ENCODE measurements at regions of chr20 and their contacts with region 1.

Region 1: GRCh38 chr20:56554869-56555268 is 21.8 kb downstream of the FAM209B start:
- DNase-seq: peak; percentile 77 to 99
- H3K4me3 ChIP-seq: peak overlapping the region; percentile 25; the same call in 1 of the 2 replicates
- H3K27ac ChIP-seq: peak overlapping the region; percentile 76
- H3K4me1 ChIP-seq: peaks cover 27% of the 10 kb centered on the region
- H3K27me3 ChIP-seq: no peaks in the 10 kb centered on the region
- CTCF ChIP-seq: peak; percentile 45

Region 2: DNA sequence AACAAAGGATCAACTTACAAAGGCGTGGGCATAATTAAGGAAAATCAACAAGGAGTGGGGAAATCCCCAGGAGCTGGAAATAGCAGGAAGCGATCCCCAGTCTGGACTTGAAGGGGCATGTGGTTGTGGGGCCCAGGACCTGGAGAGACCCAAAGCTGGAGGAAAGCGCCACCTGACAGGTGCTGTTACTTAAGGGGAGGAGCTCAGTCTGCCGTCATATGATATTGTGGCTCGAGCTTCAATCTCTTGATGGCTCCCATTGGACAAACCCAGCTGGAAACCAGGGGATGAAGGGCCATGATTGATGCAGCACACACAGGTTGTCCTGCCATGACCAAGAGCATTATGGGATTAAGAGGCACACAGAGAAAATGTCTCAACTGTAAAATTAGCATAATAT is 248.0 kb before region 1 on chr20:
- CTCF ChIA-PET with region 1: no interaction called
- POLR2A ChIA-PET with region 1: no interaction called
- intact Hi-C with region 1: no loop called
- DNase-seq: no peak
- H3K4me3 ChIP-seq: no peak overlapping the region
- H3K27ac ChIP-seq: no peak overlapping the region
- H3K4me1 ChIP-seq: no peaks in the 10 kb centered on the region
- H3K27me3 ChIP-seq: peaks cover 61% of the 10 kb centered on the region
- CTCF ChIP-seq: no peak

Region 3: GRCh38 chr20:56574531-56575142 is 19.8 kb after region 1 on chr20:
- CTCF ChIA-PET with region 1: interaction called, 13 read pairs
- POLR2A ChIA-PET with region 1: no interaction called
- intact Hi-C with region 1: loop called (anchors 1 kb)
- DNase-seq: no peak
- H3K4me3 ChIP-seq: no peak overlapping the region
- H3K27ac ChIP-seq: no peak overlapping the region
- H3K4me1 ChIP-seq: peaks cover 12% of the 10 kb centered on the region
- H3K27me3 ChIP-seq: no peaks in the 10 kb centered on the region
- CTCF ChIP-seq: no peak

Region 4: DNA sequence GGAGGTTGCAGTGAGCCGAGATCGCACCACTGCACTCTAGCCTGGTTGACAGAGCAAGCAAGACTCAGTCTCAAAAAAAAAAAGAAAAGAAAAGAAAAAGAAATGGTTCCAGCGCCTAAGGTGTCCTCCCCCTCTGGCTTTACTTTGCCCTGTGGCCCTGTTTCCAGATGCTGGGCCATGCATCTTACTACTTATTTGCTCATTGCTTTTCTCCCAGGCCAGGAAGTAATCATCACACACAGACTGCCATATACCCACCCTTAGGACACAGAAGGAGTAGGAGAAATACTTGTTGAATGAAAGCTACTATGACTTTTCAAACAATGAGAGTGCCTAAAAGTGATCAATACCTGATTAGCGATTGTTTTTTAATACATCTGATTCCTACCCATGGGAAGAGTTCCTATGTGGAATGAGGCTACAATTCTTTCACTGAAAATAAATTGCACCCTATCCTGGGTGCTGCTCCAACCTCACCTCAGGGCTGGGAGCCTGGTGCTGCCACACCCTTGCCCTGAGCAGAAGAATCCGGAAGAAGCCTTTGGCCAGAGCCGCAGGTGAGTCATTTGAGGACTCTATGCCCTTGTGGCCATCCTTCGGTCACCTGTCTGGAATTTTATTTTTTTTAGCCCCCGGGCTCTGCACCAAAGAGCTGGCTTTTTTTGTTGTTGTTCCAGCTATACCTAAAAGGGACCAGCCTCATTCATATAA is 51.5 kb after region 1 on chr20:
- CTCF ChIA-PET with region 1: no interaction called
- POLR2A ChIA-PET with region 1: no interaction called
- intact Hi-C with region 1: loop called (anchors 2 kb)
- DNase-seq: peak; percentile 95 to 98
- H3K4me3 ChIP-seq: peak overlapping the region; percentile 25; the same call in 1 of the 2 replicates
- H3K27ac ChIP-seq: peak overlapping the region; percentile 94
- H3K4me1 ChIP-seq: peaks cover 65% of the 10 kb centered on the region
- H3K27me3 ChIP-seq: no peaks in the 10 kb centered on the region
- CTCF ChIP-seq: no peak

Region 5: GRCh38 chr20:56689288-56689687 is 134.4 kb after region 1 on chr20:
- CTCF ChIA-PET with region 1: no interaction called
- POLR2A ChIA-PET with region 1: no interaction called
- intact Hi-C with region 1: loop called (anchors 1 kb)
- DNase-seq: peak; percentile 84 to 98
- H3K4me3 ChIP-seq: peak overlapping the region; percentile 50
- H3K27ac ChIP-seq: peak overlapping the region; percentile 99
- H3K4me1 ChIP-seq: peaks cover 55% of the 10 kb centered on the region
- H3K27me3 ChIP-seq: no peaks in the 10 kb centered on the region
- CTCF ChIP-seq: no peak

Region 6: GRCh38 chr20:56769870-56770600 is 215.2 kb after region 1 on chr20:
- CTCF ChIA-PET with region 1: no interaction called
- POLR2A ChIA-PET with region 1: no interaction called
- intact Hi-C with region 1: no loop called
- DNase-seq: no peak
- H3K4me3 ChIP-seq: no peak overlapping the region
- H3K27ac ChIP-seq: no peak overlapping the region
- H3K4me1 ChIP-seq: peaks cover 11% of the 10 kb centered on the region
- H3K27me3 ChIP-seq: no peaks in the 10 kb centered on the region
- CTCF ChIP-seq: no peak

Region 7: GRCh38 chr20:56974499-56975236 is 419.8 kb after region 1 on chr20:
- CTCF ChIA-PET with region 1: interaction called, 8 read pairs
- POLR2A ChIA-PET with region 1: no interaction called
- intact Hi-C with region 1: loop called (anchors 1 kb)
- DNase-seq: peak; percentile 69 to 89
- H3K4me3 ChIP-seq: peak overlapping the region; percentile 48; the same call in 1 of the 2 replicates
- H3K27ac ChIP-seq: peak overlapping the region; percentile 57
- H3K4me1 ChIP-seq: peaks cover 26% of the 10 kb centered on the region
- H3K27me3 ChIP-seq: no peaks in the 10 kb centered on the region
- CTCF ChIP-seq: peak; percentile 96

Region 8: DNA sequence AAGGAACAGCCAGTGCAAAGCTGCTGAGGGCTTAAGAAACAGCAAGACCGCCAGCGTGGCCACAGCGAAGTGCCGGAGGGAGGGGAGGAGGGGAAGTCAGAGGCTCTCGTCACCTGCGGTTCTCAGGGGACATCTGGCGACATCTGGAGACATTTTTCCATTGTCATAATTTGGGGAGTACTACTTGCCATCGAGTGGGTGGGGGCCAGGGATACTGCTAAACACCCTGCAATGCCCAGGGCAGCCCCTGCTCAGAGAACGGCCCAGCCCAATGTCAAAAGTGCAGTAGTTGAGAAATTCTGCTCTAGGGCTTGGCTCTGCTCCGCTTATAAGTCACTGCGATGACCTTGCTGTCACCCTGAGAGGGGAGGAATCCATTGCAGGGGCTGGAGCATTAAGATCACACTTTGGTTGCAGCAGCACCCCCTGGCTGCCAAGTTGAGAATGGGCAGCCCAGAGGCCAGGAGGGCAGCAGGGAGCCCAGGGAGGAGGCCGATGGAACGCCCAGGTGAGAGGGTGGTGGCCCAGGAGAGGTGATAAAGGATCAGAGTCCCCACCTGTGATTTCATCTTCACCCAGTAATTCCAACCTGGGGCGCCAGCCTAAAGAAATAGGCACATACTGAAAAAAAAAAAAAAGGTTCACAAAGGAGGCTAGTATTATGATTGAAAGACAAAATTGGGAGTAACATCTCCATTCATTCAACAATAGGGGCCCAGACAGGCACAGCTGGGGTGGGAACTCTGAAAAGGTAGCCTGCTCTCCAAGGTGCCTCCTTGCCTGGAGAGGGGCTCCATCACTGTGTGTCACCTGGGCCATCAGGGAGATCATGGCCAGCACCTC is 493.4 kb after region 1 on chr20:
- CTCF ChIA-PET with region 1: no interaction called
- POLR2A ChIA-PET with region 1: no interaction called
- intact Hi-C with region 1: loop called (anchors 1 kb)
- DNase-seq: peak; percentile 47 to 89
- H3K4me3 ChIP-seq: peak overlapping the region; percentile 34; the same call in 1 of the 2 replicates
- H3K27ac ChIP-seq: peak overlapping the region; percentile 85
- H3K4me1 ChIP-seq: peaks cover 27% of the 10 kb centered on the region
- H3K27me3 ChIP-seq: no peaks in the 10 kb centered on the region
- CTCF ChIP-seq: peak; percentile 95

Region 9: DNA sequence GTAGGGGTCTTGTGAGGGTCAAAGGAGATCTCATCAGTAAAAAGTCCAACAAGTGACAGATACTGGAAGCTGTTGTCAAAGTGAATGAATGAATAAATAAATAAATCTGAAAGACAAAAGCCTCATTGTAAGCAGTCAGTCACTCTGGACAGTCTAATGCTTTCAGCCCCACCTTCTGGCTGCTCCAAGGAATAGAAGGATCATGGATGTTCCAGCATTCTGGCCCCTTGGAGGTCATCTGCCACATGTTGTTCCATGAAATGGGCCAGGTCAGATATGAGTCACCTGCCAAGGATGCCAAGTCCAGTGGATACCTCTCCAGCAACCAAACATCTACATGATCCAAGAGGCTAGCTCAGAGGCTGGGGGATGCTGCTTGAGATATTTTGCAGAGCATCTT is 525.9 kb after region 1 on chr20:
- CTCF ChIA-PET with region 1: no interaction called
- POLR2A ChIA-PET with region 1: no interaction called
- intact Hi-C with region 1: loop called (anchors 1 kb)
- DNase-seq: peak in 1 of 2 experiments; percentile 64
- H3K4me3 ChIP-seq: no peak overlapping the region
- H3K27ac ChIP-seq: no peak overlapping the region
- H3K4me1 ChIP-seq: peaks cover 14% of the 10 kb centered on the region
- H3K27me3 ChIP-seq: no peaks in the 10 kb centered on the region
- CTCF ChIP-seq: peak; percentile 72

Measured in PC-9 (cell line).